Activated B cell treated with CpG ODN at 0.5 μM for 24 hours (primary cell): ENCODE measurements at regions of chr1 and their contacts with region 1.

Region 1: GRCh38 chr1:226355669-226356551 is 46.9 kb upstream of the LIN9 start:
- DNase-seq: no peak
- ATAC-seq: peak; percentile 69
- H3K4me3 Mint-ChIP-seq: peak overlapping the region; percentile 47
- H3K27ac Mint-ChIP-seq: peak overlapping the region; percentile 84
- H3K4me1 Mint-ChIP-seq: peaks cover 58% of the 10 kb centered on the region
- H3K27me3 Mint-ChIP-seq: no peaks in the 10 kb centered on the region
- CTCF ChIP-seq: no peak

Region 2: GRCh38 chr1:226308723-226309315 is 47.1 kb before region 1 on chr1 and contains the start of gene LIN9:
- CTCF ChIA-PET with region 1: no interaction called
- POLR2A ChIA-PET with region 1: interaction called, 3 read pairs
- intact Hi-C with region 1: loop called (anchors 2 kb)
- DNase-seq: peak; percentile 91
- ATAC-seq: peak; percentile 92
- H3K4me3 Mint-ChIP-seq: peak within 1 kb of the TSS; percentile 92
- H3K27ac Mint-ChIP-seq: peak within 1 kb of the TSS; percentile 65
- H3K4me1 Mint-ChIP-seq: peaks cover 10% of the 10 kb centered on the region
- H3K27me3 Mint-ChIP-seq: peaks cover 4% of the 10 kb centered on the region
- CTCF ChIP-seq: no peak
- total RNA-seq, gene LIN9: 3.5 and 4.5 TPM in 2 replicates

Region 3: DNA sequence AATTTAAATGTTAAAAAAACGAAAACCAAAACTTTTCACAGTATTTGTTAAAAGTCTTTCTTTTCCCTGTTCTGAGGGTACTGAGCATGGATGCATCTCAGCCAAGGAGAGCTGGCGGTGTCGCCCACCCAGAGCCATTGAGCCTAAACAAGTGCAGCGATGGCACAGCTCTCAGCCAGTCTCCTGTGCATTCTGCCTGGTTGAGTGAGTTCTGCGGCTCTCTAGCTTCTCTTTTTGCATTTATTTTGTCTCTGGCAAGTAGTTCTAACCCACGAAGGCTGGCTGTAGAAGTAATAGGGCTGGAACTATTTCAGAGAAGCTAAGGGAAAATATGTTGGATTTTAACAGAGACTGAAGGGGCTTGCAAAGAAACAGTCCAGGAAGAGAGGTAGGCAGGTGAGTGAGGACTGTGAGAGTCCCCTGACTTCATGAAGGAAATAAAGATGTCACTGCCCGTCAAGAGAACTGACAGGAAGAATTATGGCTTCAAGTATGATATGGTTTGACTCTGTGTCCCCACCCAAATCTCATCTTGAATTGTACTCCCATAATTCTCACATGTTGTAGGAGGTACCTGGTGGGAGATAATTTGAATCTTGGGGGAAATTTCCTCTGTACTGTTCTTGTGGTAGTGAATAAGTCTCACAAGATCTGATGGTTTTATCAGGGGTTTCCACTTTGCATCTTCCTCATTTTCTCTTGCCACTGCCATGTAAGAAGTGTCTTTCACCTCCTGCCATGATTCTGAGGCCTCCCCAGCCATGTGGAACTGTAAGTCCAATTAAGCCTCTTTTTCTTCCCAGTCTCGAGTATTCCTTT is 11.3 kb before region 1 on chr1:
- CTCF ChIA-PET with region 1: no interaction called
- POLR2A ChIA-PET with region 1: interaction called, 5 read pairs
- intact Hi-C with region 1: loop called (anchors 2 kb)
- DNase-seq: no peak
- ATAC-seq: peak; percentile 50
- H3K4me3 Mint-ChIP-seq: peak overlapping the region; percentile 38
- H3K27ac Mint-ChIP-seq: peak overlapping the region; percentile 79
- H3K4me1 Mint-ChIP-seq: peaks cover 27% of the 10 kb centered on the region
- H3K27me3 Mint-ChIP-seq: no peaks in the 10 kb centered on the region
- CTCF ChIP-seq: no peak

Region 4: DNA sequence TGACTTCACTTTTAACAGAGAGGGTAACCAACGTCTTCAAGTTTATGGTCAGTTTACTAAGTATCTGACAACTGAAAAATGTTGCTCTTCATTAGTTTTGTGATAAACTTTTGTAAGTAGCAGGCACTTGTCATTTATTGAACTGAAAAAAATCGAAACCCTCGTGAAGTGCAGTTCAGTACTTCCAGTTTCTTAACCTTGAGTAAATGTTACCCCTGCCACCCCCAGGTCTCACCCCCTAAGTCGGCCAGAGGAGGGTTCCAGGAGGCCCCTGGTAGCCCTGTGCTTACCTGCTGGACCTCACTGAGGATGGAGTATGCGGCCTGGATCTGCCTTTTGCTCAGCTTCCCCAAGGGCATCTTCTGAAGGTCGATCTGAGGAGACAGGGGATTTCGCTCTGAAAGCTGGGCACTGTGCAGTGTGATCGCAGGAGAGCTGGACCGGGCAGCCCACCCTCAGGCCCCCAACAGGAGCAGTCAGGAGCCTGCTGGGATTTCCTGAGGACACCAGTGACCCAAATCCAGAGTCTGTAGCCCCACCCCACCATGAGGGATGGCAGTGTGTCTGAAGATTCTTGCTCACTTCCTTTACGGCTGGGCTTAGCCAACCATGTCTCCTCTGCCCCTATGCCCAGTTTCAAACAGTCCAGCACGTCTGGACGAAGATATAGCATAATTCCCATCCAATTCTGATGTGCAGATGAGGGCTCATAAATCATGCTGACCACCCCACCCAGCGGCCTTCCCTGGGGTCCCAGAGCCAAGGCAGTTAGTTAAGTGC is 14.4 kb after region 1 on chr1:
- CTCF ChIA-PET with region 1: no interaction called
- POLR2A ChIA-PET with region 1: interaction called, 4 read pairs
- intact Hi-C with region 1: loop called (anchors 1 kb)
- DNase-seq: no peak
- ATAC-seq: peak; percentile 74
- H3K4me3 Mint-ChIP-seq: peak overlapping the region; percentile 68
- H3K27ac Mint-ChIP-seq: peak overlapping the region; percentile 91
- H3K4me1 Mint-ChIP-seq: peaks cover 48% of the 10 kb centered on the region
- H3K27me3 Mint-ChIP-seq: no peaks in the 10 kb centered on the region
- CTCF ChIP-seq: no peak